CD14-positive monocyte (primary cell): ENCODE measurements at regions of chr9 and their contacts with region 1.

Region 1: GRCh38 chr9:97598461-97599288 is 34.5 kb downstream of the TSTD2 start:
- DNase-seq: peak; percentile 50 to 71 (median 66)
- H3K4me3 ChIP-seq: peak overlapping the region in 1 of 3 experiments; percentile 11
- H3K4me3 Mint-ChIP-seq: peak overlapping the region in 1 of 2 donors; percentile 23
- H3K27ac ChIP-seq: no peak overlapping the region
- H3K27ac Mint-ChIP-seq: no peak overlapping the region
- H3K4me1 ChIP-seq: peaks cover 4 to 6% of the 10 kb centered on the region in 2 donors
- H3K4me1 Mint-ChIP-seq: peaks cover 7% of the 10 kb centered on the region
- H3K27me3 ChIP-seq: no peaks in the 10 kb centered on the region
- H3K27me3 Mint-ChIP-seq: peaks cover 0 to 4% (median 0%) of the 10 kb centered on the region in 3 donors
- CTCF ChIP-seq: peak; percentile 83

Region 2: GRCh38 chr9:97406620-97407177 is 192.0 kb before region 1 on chr9:
- intact Hi-C with region 1: loop called in 1 of 2 experiments (anchors 10 kb)
- DNase-seq: no peak
- H3K4me3 ChIP-seq: no peak overlapping the region
- H3K4me3 Mint-ChIP-seq: no peak overlapping the region
- H3K27ac ChIP-seq: no peak overlapping the region
- H3K27ac Mint-ChIP-seq: peak overlapping the region in 1 of 7 donors; percentile 16
- H3K4me1 ChIP-seq: peaks cover 3 to 5% of the 10 kb centered on the region in 2 donors
- H3K4me1 Mint-ChIP-seq: peaks cover 13% of the 10 kb centered on the region
- H3K27me3 ChIP-seq: no peaks in the 10 kb centered on the region
- H3K27me3 Mint-ChIP-seq: peaks cover 0 to 8% (median 2%) of the 10 kb centered on the region in 3 donors
- CTCF ChIP-seq: no peak

Region 3: DNA sequence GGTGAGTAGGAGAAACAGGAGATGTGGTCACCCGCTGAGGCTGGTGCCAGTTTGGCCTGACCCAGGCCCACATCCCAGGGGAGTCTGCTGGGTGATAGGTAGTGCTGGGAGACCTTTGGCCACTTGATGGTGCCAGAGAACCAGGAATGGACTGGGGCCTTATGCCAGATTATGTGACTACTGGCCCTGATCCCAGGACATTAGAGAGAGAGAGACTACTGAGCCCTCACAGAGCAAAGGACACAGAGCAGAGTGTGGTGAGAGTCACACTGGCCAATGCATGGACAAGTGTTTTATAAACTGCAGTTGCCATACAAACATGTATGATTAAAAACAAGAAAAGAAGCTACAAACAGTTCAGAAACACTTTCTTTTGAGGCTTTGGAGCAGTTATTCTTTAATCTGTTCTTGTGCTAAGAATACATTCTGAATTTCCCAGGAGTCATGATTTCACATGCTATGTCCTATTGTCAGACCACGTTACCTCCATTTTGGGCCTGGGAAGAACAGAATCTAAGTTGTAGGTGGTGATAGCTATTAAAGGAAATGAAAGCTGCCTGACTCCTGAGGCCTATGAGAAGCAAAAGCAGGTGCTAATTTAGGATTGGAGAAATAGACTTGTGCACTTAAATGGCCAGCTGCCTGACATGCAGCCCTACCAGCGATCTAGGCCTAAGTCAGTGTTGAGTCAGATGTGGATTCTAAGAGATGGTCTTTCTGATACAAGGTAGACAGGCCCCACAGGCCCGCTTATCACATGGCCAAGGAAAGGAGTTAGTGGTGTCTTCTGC is 129.8 kb before region 1 on chr9:
- intact Hi-C with region 1: loop called (anchors 5 to 10 kb)
- DNase-seq: peak; percentile 9 to 38 (median 25)
- H3K4me3 ChIP-seq: no peak overlapping the region
- H3K4me3 Mint-ChIP-seq: no peak overlapping the region
- H3K27ac ChIP-seq: peak overlapping the region in 1 of 2 donors; percentile 12
- H3K27ac Mint-ChIP-seq: peak overlapping the region in 4 of 7 donors; percentile 2 to 63 (median 26)
- H3K4me1 ChIP-seq: no peaks in the 10 kb centered on the region
- H3K4me1 Mint-ChIP-seq: no peaks in the 10 kb centered on the region
- H3K27me3 ChIP-seq: no peaks in the 10 kb centered on the region
- H3K27me3 Mint-ChIP-seq: no peaks in the 10 kb centered on the region
- CTCF ChIP-seq: peak; percentile 46

Region 4: DNA sequence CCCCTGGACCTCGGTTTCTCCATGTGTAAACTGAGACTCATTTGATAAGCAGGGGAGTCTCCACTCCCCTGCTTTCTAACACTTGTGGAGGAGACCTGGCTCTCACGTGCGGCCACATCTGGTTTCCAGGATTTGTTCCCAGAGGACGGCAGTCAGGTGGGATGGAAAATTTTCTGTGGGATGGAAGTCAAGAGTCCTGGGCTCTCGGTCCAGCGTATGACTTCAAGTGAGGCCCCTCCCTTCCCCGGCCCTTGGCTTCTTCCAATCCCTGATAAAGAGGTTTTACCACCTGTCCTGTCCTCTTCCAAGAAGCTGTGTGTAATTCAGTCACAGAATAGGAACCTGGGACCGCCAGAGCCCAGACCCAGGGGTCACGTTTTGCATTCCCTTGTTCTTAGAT is 62.2 kb before region 1 on chr9:
- intact Hi-C with region 1: no loop called
- DNase-seq: no peak
- H3K4me3 ChIP-seq: no peak overlapping the region
- H3K4me3 Mint-ChIP-seq: no peak overlapping the region
- H3K27ac ChIP-seq: no peak overlapping the region
- H3K27ac Mint-ChIP-seq: no peak overlapping the region
- H3K4me1 ChIP-seq: no peaks in the 10 kb centered on the region
- H3K4me1 Mint-ChIP-seq: no peaks in the 10 kb centered on the region
- H3K27me3 ChIP-seq: no peaks in the 10 kb centered on the region
- H3K27me3 Mint-ChIP-seq: peaks cover 1 to 3% (median 1%) of the 10 kb centered on the region in 3 donors
- CTCF ChIP-seq: no peak

Region 5: DNA sequence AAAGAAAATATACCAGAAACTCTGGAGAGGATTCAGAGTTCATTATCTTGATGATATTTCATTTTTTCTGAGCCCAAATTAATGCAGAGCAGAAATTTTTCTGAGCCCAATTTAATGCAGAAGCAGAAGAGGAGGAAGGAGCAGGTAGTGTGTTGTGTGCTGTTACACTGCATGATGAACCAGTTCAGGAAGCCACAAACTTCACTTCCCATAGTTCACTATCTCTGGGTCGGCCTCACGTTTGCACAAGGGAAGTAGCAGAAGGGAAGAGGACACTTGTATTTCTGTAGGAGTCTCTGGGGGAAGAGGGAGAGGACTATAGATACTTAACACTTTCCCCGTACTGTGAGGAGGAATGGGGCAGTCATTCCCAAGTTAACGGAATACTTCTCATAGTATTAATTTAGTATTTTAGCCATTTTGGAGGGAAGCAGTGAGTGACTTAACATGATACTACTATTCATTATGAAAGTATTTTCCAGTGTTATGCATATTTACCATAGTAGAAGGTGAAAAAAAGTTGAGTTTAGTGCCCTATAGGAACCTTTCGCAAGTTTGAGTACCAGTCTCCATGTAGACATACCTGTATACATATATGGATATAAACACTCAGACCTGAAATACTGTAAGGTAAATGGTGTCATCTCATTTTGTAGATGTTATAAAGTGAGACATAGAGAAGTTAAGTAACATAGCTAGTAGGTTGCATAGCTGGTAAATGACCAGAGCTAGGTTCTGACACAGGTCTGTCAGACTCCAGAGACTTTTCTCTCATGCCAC is 68.4 kb after region 1 on chr9:
- intact Hi-C with region 1: no loop called
- DNase-seq: peak in 2 of 3 donors; percentile 3 to 11
- H3K4me3 ChIP-seq: no peak overlapping the region
- H3K4me3 Mint-ChIP-seq: no peak overlapping the region
- H3K27ac ChIP-seq: peak overlapping the region in 1 of 2 donors; percentile 49
- H3K27ac Mint-ChIP-seq: peak overlapping the region in 3 of 7 donors; percentile 17 to 58 (median 41)
- H3K4me1 ChIP-seq: peaks cover 2 to 8% of the 10 kb centered on the region in 2 donors
- H3K4me1 Mint-ChIP-seq: peaks cover 10% of the 10 kb centered on the region
- H3K27me3 ChIP-seq: no peaks in the 10 kb centered on the region
- H3K27me3 Mint-ChIP-seq: no peaks in the 10 kb centered on the region
- CTCF ChIP-seq: no peak